H1 (cell line): ENCODE measurements at regions of chr11 and their contacts with region 1.

Region 1: GRCh38 chr11:11028017-11028692 is 170.3 kb upstream of the ZBED5 start:
- DNase-seq: peak; percentile 49 to 88
- H3K4me3 ChIP-seq: no peak overlapping the region
- H3K27ac ChIP-seq: no peak overlapping the region
- H3K4me1 ChIP-seq: no peaks in the 10 kb centered on the region
- H3K27me3 ChIP-seq: no peaks in the 10 kb centered on the region
- CTCF ChIP-seq: peak; percentile 76 to 91 (median 87)
- EP300 ChIP-seq: no peak
- POLR2A ChIP-seq: no peak
- RAD21 ChIP-seq: peak; percentile 88 to 90

Region 2: GRCh38 chr11:10933455-10934292 is 94.5 kb before region 1 on chr11:
- CTCF ChIA-PET with region 1: interaction called, 82 read pairs
- POLR2A ChIA-PET with region 1: no interaction called
- DNase-seq: peak; percentile 65 to 96
- H3K4me3 ChIP-seq: peak overlapping the region; percentile 64 to 86 (median 76); a peak in 7 of 8 replicates
- H3K27ac ChIP-seq: peak overlapping the region; percentile 49; the same call in 1 of the 2 replicates
- H3K4me1 ChIP-seq: peaks cover 3 to 14% (median 5%) of the 10 kb centered on the region in 4 experiments; a peak in 4 of 7 replicates
- H3K27me3 ChIP-seq: peaks cover 0 to 11% (median 10%) of the 10 kb centered on the region in 4 experiments; a peak in 5 of 7 replicates
- CTCF ChIP-seq: peak; percentile 80 to 98 (median 95)
- EP300 ChIP-seq: no peak
- POLR2A ChIP-seq: peak in 1 of 2 experiments; percentile 53; a peak in 1 of 3 replicates
- RAD21 ChIP-seq: peak; percentile 97 to 98

Region 3: DNA sequence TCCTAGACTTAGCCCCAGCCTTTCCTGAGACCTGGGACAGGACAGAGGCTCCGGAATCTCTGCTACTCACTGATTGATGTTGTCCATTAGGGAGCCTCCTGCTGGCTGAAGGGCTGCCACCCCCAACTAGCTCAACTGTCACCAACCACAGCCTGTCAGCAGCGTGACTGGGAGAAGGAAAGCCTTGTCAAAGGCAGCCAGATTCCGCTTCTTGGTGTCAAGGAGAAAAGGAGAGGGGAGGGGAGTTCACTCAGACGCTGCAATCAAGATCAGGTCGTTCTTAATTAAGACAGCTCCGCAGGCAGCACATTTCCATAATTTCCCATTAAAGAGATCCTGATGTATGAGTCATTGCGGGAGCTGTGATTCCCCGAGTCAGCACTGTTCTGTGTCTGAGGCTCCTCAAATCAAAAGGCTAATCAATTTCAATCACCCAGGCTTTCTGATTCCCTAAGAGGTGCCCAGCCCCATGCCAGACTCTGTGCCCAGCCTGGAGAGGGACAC is 17.5 kb before region 1 on chr11:
- CTCF ChIA-PET with region 1: interaction called, 16 read pairs
- POLR2A ChIA-PET with region 1: no interaction called
- DNase-seq: no peak
- H3K4me3 ChIP-seq: no peak overlapping the region
- H3K27ac ChIP-seq: no peak overlapping the region
- H3K4me1 ChIP-seq: peaks cover 3 to 8% (median 5%) of the 10 kb centered on the region in 4 experiments; a peak in 5 of 7 replicates
- H3K27me3 ChIP-seq: no peaks in the 10 kb centered on the region; a peak in 2 of 7 replicates
- CTCF ChIP-seq: peak; percentile 16 to 61 (median 47)
- EP300 ChIP-seq: no peak
- POLR2A ChIP-seq: no peak
- RAD21 ChIP-seq: peak; percentile 34 to 55; a peak in 3 of 4 replicates

Region 4: GRCh38 chr11:11078344-11079086 is 50.4 kb after region 1 on chr11:
- CTCF ChIA-PET with region 1: interaction called, 34 read pairs
- POLR2A ChIA-PET with region 1: interaction called, 4 read pairs
- DNase-seq: no peak
- H3K4me3 ChIP-seq: no peak overlapping the region
- H3K27ac ChIP-seq: no peak overlapping the region
- H3K4me1 ChIP-seq: peaks cover 0 to 11% (median 8%) of the 10 kb centered on the region in 4 experiments; a peak in 6 of 7 replicates
- H3K27me3 ChIP-seq: no peaks in the 10 kb centered on the region; a peak in 1 of 7 replicates
- CTCF ChIP-seq: peak in 2 of 3 experiments; percentile 12 to 21; a peak in 1 of 4 replicates
- EP300 ChIP-seq: no peak
- POLR2A ChIP-seq: no peak
- RAD21 ChIP-seq: peak; percentile 45 to 51

Region 5: DNA sequence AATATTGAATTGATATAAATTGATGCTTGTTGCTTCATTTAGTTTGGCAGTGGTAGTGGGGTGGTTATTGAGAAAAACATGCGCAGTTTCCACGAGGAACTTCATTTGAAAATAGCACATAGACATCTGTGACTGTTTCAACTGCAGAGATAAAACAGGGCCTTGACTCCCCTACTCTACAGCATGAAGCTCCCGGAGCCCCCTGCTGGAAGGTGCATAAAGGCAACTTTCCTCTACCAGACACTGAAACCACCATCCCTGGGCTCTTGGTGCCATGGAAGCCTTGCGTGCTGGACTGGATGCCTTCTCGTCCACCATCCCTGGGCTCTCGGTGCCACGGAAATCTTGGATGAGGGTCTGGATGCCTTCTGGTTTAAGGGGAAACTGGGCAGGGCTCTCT is 129.0 kb after region 1 on chr11:
- CTCF ChIA-PET with region 1: interaction called, 14 read pairs
- POLR2A ChIA-PET with region 1: no interaction called
- DNase-seq: no peak
- H3K4me3 ChIP-seq: no peak overlapping the region
- H3K27ac ChIP-seq: no peak overlapping the region
- H3K4me1 ChIP-seq: peaks cover 0 to 2% (median 0%) of the 10 kb centered on the region in 4 experiments; a peak in 2 of 7 replicates
- H3K27me3 ChIP-seq: no peaks in the 10 kb centered on the region
- CTCF ChIP-seq: peak; percentile 51 to 64 (median 60)
- EP300 ChIP-seq: no peak
- POLR2A ChIP-seq: no peak
- RAD21 ChIP-seq: peak; percentile 45 to 56

Region 6: GRCh38 chr11:11230802-11231562 is 202.8 kb after region 1 on chr11:
- CTCF ChIA-PET with region 1: interaction called, 24 read pairs
- POLR2A ChIA-PET with region 1: no interaction called
- DNase-seq: peak in 1 of 2 experiments; percentile 79
- H3K4me3 ChIP-seq: no peak overlapping the region
- H3K27ac ChIP-seq: no peak overlapping the region
- H3K4me1 ChIP-seq: no peaks in the 10 kb centered on the region
- H3K27me3 ChIP-seq: peaks cover 0 to 4% (median 0%) of the 10 kb centered on the region in 4 experiments; a peak in 2 of 7 replicates
- CTCF ChIP-seq: peak; percentile 86 to 87 (median 86)
- EP300 ChIP-seq: no peak
- POLR2A ChIP-seq: no peak
- RAD21 ChIP-seq: peak; percentile 76 to 86

Region 7: GRCh38 chr11:11787305-11788062 is 759.3 kb after region 1 on chr11:
- CTCF ChIA-PET with region 1: interaction called, 26 read pairs
- POLR2A ChIA-PET with region 1: no interaction called
- DNase-seq: peak in 1 of 2 experiments; percentile 82
- H3K4me3 ChIP-seq: no peak overlapping the region
- H3K27ac ChIP-seq: no peak overlapping the region
- H3K4me1 ChIP-seq: peaks cover 0 to 8% (median 6%) of the 10 kb centered on the region in 4 experiments; a peak in 4 of 7 replicates
- H3K27me3 ChIP-seq: no peaks in the 10 kb centered on the region
- CTCF ChIP-seq: peak; percentile 53 to 83 (median 81)
- EP300 ChIP-seq: no peak
- POLR2A ChIP-seq: no peak
- RAD21 ChIP-seq: peak; percentile 98